Colonic mucosa (tissue), 4 donors: ENCODE measurements at regions of chr18 and their contacts with region 1.

Region 1: GRCh38 chr18:2547477-2548087 is 23.7 kb downstream of the METTL4 start:
- DNase-seq: no peak
- H3K4me3 ChIP-seq: no peak overlapping the region
- H3K27ac ChIP-seq: no peak overlapping the region
- H3K4me1 ChIP-seq: no peaks in the 10 kb centered on the region
- H3K27me3 ChIP-seq: no peaks in the 10 kb centered on the region
- CTCF ChIP-seq: peak; percentile 54

Region 2: GRCh38 chr18:864872-865273 is 1682.7 kb before region 1 on chr18:
- intact Hi-C with region 1: loop called (anchors 5 kb)
- DNase-seq: peak; percentile 62
- H3K4me3 ChIP-seq: no peak overlapping the region
- H3K27ac ChIP-seq: no peak overlapping the region
- H3K4me1 ChIP-seq: no peaks in the 10 kb centered on the region
- H3K27me3 ChIP-seq: no peaks in the 10 kb centered on the region
- CTCF ChIP-seq: peak; percentile 94

Region 3: DNA sequence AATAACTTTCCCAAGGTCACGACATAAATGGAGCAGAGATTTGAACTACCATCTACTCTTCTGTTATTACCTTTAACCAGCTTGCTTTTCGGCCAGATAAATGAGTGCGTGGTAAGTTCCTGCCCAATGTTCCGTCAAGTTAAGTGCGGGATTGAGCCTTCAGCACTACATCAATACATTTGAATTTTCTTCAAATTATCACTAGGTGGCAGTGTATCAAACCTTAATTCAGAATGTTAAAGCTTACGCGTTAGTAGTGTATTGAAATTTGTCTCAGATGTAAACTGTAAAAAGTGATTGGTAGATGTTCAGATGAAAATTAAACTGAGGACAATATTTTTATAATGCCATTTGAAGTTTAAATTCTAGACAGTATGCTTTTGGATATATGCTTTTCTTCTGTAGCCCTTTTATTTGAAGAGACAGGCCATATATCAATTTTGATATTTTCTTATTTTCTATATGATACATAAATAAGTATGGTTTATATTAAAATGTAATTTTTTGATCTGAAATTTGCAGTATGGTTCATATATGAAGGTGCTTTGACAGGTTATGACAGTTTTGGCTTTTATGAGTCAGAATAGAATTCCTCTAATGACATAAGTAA is 961.6 kb before region 1 on chr18:
- intact Hi-C with region 1: loop called (anchors 10 kb)
- DNase-seq: no peak
- H3K4me3 ChIP-seq: no peak overlapping the region
- H3K27ac ChIP-seq: no peak overlapping the region
- H3K4me1 ChIP-seq: no peaks in the 10 kb centered on the region
- H3K27me3 ChIP-seq: no peaks in the 10 kb centered on the region
- CTCF ChIP-seq: peak; percentile 42

Region 4: DNA sequence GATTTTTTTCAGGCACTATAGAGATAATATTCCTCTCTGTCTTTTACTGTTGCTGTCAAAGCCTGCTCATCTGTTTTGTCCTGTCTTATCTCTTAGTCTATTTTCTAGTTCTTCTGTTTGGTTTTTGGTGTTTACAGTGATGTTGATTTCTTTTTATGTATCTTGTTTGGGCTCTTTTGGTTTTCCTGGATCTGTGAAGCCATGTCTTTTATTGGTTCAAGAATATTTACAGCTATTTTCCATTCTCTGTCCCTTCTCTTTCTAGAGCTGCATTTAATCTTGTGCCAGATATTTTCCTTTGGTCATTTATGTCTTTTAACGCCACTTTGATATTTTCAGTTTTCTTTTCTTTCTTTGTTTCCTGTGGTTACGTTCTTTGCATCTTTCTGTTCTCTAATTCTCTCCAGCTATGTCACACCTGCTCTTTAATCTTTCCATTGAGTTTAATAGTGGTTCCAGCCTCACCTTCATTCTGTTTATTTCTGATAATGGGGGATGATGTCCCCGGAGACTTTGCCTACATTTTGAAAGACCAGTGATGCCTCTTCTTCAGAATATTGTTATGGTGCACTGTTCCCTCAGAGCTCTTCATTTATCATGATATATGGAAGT is 139.9 kb after region 1 on chr18:
- intact Hi-C with region 1: no loop called
- DNase-seq: no peak
- H3K4me3 ChIP-seq: no peak overlapping the region
- H3K27ac ChIP-seq: no peak overlapping the region
- H3K4me1 ChIP-seq: no peaks in the 10 kb centered on the region
- H3K27me3 ChIP-seq: no peaks in the 10 kb centered on the region
- CTCF ChIP-seq: no peak

Region 5: DNA sequence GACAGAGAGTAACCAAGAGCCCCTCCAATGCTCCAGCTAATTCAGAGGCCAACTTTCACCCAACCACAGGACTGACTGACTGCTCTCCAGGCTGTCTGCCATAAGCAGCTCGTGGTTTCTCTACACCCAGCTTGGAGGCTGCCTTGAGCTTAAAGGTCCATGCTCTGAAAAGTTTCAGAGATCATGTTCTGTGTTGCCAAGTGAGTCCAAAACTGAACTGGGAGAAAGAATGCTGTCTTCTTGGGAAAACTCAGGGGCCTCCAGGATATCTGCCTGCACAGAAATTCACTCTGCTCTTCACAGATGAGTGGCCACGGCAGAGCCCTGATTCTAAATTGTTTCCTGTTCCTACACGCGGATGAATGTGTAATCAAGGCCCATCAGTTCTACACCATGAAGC is 414.2 kb after region 1 on chr18:
- intact Hi-C with region 1: no loop called
- DNase-seq: no peak
- H3K4me3 ChIP-seq: no peak overlapping the region
- H3K27ac ChIP-seq: peak overlapping the region; percentile 63
- H3K4me1 ChIP-seq: no peaks in the 10 kb centered on the region
- H3K27me3 ChIP-seq: no peaks in the 10 kb centered on the region
- CTCF ChIP-seq: no peak